ENCODE measurements at regions of chr3 and their contacts with region 1.

Region 1: GRCh38 chr3:111717601-111718000 is 122.5 kb upstream of the ZBED2 start:
- DNase-seq: peak; percentile 66
- H3K4me3 Mint-ChIP-seq: no peak overlapping the region
- H3K27ac Mint-ChIP-seq: no peak overlapping the region
- H3K4me1 Mint-ChIP-seq: peaks cover 8% of the 10 kb centered on the region
- H3K27me3 Mint-ChIP-seq: no peaks in the 10 kb centered on the region
- CTCF ChIP-seq: peak; percentile 79

Region 2: DNA sequence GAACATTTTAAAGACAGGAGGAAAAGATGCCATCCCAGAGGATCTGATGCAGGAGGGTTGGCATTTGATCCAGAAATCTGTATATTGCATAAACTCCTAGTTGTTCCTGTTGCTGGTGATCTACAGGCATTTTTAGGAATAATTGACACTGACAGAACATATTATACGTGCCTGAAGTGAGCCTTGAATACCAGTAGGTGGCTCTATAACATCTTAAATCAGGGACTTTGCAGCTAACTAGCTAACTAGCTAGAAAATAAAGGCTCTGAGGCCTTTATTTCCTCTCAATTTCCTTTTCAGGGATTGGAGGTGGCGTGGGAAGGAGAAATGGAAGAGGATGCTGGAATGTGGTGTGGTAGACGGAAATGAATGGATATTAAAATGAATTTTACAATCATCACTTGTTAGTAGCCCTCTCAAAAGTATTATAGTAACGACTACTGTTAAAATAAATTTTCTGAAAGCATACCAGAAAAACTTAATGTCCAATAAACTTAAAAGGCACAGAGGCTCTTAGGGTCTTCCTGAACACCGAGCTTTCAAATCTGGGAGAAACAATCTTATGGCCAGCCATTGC is 48.6 kb before region 1 on chr3:
- CTCF ChIA-PET with region 1: interaction called, 38 read pairs
- intact Hi-C with region 1: loop called (anchors 1 kb)
- DNase-seq: no peak
- H3K4me3 Mint-ChIP-seq: no peak overlapping the region
- H3K27ac Mint-ChIP-seq: no peak overlapping the region
- H3K4me1 Mint-ChIP-seq: peaks cover 33% of the 10 kb centered on the region
- H3K27me3 Mint-ChIP-seq: no peaks in the 10 kb centered on the region
- CTCF ChIP-seq: peak; percentile 32

Region 3: DNA sequence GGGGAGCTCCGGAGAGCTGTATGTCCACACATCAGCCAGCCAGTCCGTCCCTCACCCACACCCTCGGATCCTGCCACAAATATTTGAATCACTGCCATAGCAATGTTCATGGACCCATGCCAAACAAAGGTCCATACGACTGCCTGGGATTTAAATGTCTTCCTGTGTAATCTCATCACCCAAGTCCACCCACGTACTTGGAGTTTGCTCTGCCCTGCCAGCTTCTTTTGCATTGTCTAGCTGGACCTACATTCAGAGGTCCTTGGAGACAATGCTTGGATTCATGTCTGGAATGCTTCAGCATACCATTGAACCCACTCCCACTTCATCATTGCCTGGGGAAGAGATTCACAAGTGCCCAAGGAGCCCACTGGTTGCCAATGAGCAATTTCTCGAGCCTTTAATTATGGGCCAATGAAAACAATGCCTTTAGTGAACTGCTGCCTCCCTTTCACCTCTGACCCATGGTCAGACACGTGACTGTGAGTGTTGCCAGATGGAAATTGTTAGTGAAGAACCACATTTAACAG is 51.0 kb after region 1 on chr3:
- CTCF ChIA-PET with region 1: no interaction called
- intact Hi-C with region 1: loop called (anchors 5 kb)
- DNase-seq: peak; percentile 72
- H3K4me3 Mint-ChIP-seq: peak overlapping the region; percentile 0
- H3K27ac Mint-ChIP-seq: peak overlapping the region; percentile 54
- H3K4me1 Mint-ChIP-seq: peaks cover 45% of the 10 kb centered on the region
- H3K27me3 Mint-ChIP-seq: no peaks in the 10 kb centered on the region
- CTCF ChIP-seq: no peak

Region 4: DNA sequence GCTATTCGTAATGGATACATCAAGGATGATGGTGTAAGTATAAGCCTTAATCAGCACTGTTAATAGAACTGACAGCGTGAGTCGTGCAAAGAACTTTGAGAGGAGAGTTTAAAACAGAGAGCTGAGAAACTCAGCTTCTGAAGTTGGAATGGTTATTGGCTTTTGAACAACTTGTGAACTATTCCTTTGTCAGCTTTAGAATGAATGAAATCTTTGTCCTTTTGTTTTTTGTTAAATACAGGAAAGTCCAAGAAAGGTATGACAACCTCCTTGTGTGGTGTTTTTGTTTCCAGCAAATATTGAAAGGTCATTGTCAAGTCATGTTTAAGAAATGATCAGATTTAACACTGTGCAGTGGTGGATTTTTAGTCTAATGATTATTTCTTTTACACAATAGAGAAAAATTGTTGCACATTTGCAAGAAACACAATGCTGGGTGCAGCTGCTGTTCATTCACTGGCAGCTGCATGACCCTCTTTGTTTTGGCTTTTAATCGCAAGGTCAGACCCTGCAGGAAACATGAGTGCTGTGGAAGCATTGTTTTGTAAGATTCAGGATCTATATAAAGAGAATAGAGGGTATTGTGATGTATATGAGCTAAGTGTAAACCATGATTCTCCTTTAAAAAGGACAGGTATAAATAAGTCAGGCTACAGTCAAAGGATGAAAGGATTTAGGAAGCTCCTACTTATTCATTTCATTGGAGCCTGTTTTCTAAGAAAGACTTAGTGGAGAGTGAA is 239.6 kb after region 1 on chr3:
- CTCF ChIA-PET with region 1: interaction called, 12 read pairs
- intact Hi-C with region 1: no loop called
- DNase-seq: no peak
- H3K4me3 Mint-ChIP-seq: no peak overlapping the region
- H3K27ac Mint-ChIP-seq: peak overlapping the region; percentile 7
- H3K4me1 Mint-ChIP-seq: peaks cover 24% of the 10 kb centered on the region
- H3K27me3 Mint-ChIP-seq: no peaks in the 10 kb centered on the region
- CTCF ChIP-seq: no peak

Region 5: GRCh38 chr3:112013058-112013783 is 295.6 kb after region 1 on chr3:
- CTCF ChIA-PET with region 1: interaction called, 12 read pairs
- intact Hi-C with region 1: no loop called
- DNase-seq: peak; percentile 62
- H3K4me3 Mint-ChIP-seq: no peak overlapping the region
- H3K27ac Mint-ChIP-seq: no peak overlapping the region
- H3K4me1 Mint-ChIP-seq: no peaks in the 10 kb centered on the region
- H3K27me3 Mint-ChIP-seq: no peaks in the 10 kb centered on the region
- CTCF ChIP-seq: peak; percentile 26

Measured in Calu3 (cell line).